Mammary epithelial cell (primary cell): ENCODE measurements at regions of chr6 and their contacts with region 1.

Region 1: GRCh38 chr6:126339796-126340609 is at the start of gene CENPW:
- DNase-seq: peak; percentile 90
- H3K4me3 ChIP-seq: peak within 1 kb of the TSS; percentile 72 to 89 (median 78)
- H3K27ac ChIP-seq: peak within 1 kb of the TSS; percentile 86
- H3K4me1 ChIP-seq: peaks cover 10% of the 10 kb centered on the region
- H3K27me3 ChIP-seq: no peaks in the 10 kb centered on the region
- CTCF ChIP-seq: no peak
- total RNA-seq, gene CENPW: 1.7 to 42.0 TPM

Region 2: DNA sequence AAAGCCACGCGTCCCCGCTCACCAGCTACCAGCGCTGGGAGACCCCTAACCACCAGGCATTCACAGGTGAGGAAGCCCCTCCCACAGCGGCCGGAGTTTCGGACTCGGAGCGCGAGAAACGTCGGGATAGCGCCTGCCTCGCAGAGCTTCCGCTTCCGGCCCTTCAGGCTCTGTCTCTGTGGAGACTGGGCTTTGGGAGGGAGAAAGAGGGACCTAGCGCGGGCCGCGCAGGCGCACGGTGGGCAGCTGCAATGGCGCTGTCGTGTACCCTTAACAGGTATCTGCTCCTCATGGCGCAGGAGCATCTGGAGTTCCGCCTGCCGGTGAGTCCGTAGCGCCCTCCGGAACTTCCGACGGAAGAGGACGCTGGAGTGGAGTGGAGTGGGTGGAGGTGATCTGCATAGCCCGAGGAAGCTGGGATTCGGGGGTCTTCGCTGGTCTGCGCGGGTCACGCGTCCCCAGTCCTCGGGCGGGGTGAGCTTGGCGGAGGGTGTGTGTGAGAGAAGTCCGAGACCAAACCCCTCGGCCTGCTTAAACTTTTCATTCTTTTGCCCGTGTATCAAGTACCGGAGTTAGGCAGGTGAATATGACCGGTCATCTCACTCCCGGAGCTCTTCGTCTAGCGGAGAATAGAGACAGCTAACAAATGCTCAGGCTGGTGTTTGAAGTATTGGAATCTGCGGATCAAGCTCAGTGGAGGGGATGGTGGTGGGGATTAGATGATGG is 353.5 kb before region 1 on chr6 and contains the start of gene TRMT11:
- CTCF ChIA-PET with region 1: interaction called, 3 read pairs
- dilution Hi-C with region 1: no loop called
- in situ Hi-C with region 1: no loop called
- intact Hi-C with region 1: loop called (anchors 5 kb)
- DNase-seq: peak; percentile 89
- H3K4me3 ChIP-seq: peak within 1 kb of the TSS; percentile 52 to 91 (median 84)
- H3K27ac ChIP-seq: peak within 1 kb of the TSS; percentile 87
- H3K4me1 ChIP-seq: peaks cover 12% of the 10 kb centered on the region
- H3K27me3 ChIP-seq: no peaks in the 10 kb centered on the region
- CTCF ChIP-seq: no peak
- total RNA-seq, gene TRMT11: 19.5 to 23.3 TPM

Region 3: DNA sequence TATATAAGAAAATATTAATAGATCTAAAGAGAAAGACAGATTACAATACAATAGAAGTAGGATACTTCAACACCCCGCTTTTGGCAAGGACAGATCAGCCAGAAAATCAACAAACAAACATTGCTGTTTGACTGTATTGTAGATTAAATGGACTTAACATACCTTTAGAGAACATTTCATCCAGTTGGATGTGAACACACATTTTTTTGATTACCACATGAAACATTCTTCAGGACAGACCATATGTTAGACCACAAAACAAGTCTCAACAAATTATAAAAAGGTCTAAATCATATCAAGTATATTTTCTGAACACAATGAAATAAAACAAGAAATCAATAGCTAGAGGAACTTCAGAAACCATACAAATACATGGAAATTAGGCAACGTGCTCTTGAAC is 205.5 kb before region 1 on chr6:
- CTCF ChIA-PET with region 1: no interaction called
- dilution Hi-C with region 1: no loop called
- in situ Hi-C with region 1: no loop called
- intact Hi-C with region 1: no loop called
- DNase-seq: peak; percentile 42
- H3K4me3 ChIP-seq: no peak overlapping the region
- H3K27ac ChIP-seq: no peak overlapping the region
- H3K4me1 ChIP-seq: no peaks in the 10 kb centered on the region
- H3K27me3 ChIP-seq: no peaks in the 10 kb centered on the region
- CTCF ChIP-seq: no peak

Region 4: GRCh38 chr6:126318793-126319192 is 21.2 kb before region 1 on chr6:
- CTCF ChIA-PET with region 1: no interaction called
- dilution Hi-C with region 1: no loop called
- in situ Hi-C with region 1: no loop called
- intact Hi-C with region 1: no loop called
- DNase-seq: no peak
- H3K4me3 ChIP-seq: no peak overlapping the region
- H3K27ac ChIP-seq: no peak overlapping the region
- H3K4me1 ChIP-seq: no peaks in the 10 kb centered on the region
- H3K27me3 ChIP-seq: no peaks in the 10 kb centered on the region
- CTCF ChIP-seq: no peak

Region 5: DNA sequence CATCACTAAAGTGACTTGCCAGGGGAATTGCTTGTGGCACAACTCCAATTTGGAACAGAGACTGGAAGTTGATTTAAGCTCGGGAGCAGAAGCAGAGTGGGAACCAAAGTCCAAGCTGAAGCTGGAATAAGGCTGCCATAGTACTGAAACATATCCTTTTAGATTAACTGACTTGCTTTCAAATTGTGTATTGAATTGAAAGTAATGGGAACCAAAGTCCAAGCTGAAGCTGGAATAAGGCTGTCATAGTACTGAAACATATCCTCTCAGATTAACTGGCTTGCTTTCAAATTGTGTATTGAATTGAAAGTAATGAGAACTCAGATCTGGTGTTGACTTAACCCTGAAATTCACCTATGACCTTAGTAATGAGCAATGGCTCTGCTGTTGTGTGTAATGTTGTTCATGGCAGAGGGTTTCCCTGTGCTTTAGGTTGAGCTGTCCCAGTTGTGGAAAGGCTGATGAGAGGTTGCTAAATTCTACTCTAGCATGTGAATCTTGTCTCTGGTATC is 40.1 kb after region 1 on chr6:
- CTCF ChIA-PET with region 1: no interaction called
- dilution Hi-C with region 1: no loop called
- in situ Hi-C with region 1: no loop called
- intact Hi-C with region 1: no loop called
- DNase-seq: no peak
- H3K4me3 ChIP-seq: no peak overlapping the region
- H3K27ac ChIP-seq: no peak overlapping the region
- H3K4me1 ChIP-seq: no peaks in the 10 kb centered on the region
- H3K27me3 ChIP-seq: no peaks in the 10 kb centered on the region
- CTCF ChIP-seq: no peak